ENCODE measurements at regions of chr15 and their contacts with region 1.

Region 1: DNA sequence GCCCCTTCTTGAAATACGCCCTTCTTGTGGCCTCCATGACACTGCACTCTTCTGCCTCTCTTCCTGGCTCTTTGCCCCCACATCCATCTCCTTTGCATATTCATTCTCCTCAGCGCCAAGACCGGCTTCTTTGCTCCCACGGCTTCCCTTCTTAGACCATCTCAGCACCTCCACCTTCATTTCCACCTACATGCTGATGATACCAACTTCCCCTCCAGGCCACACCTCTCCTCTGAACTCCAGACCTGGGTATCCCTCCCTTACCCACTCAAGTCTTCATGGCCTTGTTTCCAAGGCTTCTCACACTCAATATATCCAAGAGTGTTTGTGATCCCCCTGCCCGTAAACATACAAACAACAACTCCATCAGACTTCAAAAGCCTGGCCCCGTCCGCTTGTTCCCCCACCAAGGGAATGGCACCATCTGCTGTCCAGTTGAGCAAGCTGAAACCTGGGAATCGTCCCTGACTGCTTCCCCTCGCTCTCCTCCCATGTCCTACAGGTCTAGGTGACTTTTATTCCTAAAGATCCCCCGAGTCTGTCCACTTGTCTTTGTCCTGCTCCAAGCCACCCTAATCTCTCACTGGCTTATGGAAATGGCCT is 27.8 kb upstream of the FAM174B start:
- DNase-seq: no peak
- H3K4me3 ChIP-seq: no peak overlapping the region
- H3K27ac ChIP-seq: no peak overlapping the region
- H3K4me1 ChIP-seq: peaks cover 0 to 16% (median 0%) of the 10 kb centered on the region in 4 donors
- H3K27me3 ChIP-seq: no peaks in the 10 kb centered on the region
- CTCF ChIP-seq: peak; percentile 37 to 43

Region 2: GRCh38 chr15:92638291-92638708 is 45.0 kb before region 1 on chr15:
- intact Hi-C with region 1: loop called (anchors 2 kb)
- DNase-seq: no peak
- H3K4me3 ChIP-seq: no peak overlapping the region
- H3K27ac ChIP-seq: no peak overlapping the region
- H3K4me1 ChIP-seq: peaks cover 0 to 42% (median 21%) of the 10 kb centered on the region in 4 donors
- H3K27me3 ChIP-seq: no peaks in the 10 kb centered on the region
- CTCF ChIP-seq: no peak